ENCODE measurements at regions of chr12 and their contacts with region 1.

Region 1: GRCh38 chr12:93569656-93570551 is 2.6 kb upstream of the SOCS2 start:
- DNase-seq: peak; percentile 94
- H3K4me3 ChIP-seq: peak overlapping the region; percentile 92
- H3K27ac ChIP-seq: peak overlapping the region; percentile 58
- H3K4me1 ChIP-seq: peaks cover 9% of the 10 kb centered on the region
- H3K27me3 ChIP-seq: no peaks in the 10 kb centered on the region

Region 2: GRCh38 chr12:93742110-93742934 is 172.4 kb after region 1 on chr12:
- in situ Hi-C with region 1: loop called (anchors 5 kb)
- DNase-seq: peak; percentile 90
- H3K4me3 ChIP-seq: peak overlapping the region; percentile 90
- H3K27ac ChIP-seq: peak overlapping the region; percentile 87
- H3K4me1 ChIP-seq: peaks cover 40% of the 10 kb centered on the region
- H3K27me3 ChIP-seq: no peaks in the 10 kb centered on the region

Measured in GM23248 (cell line).